Caco-2 (cell line): ENCODE measurements at regions of chr21 and their contacts with region 1.

Region 1: GRCh38 chr21:42289926-42290325 is 25.3 kb downstream of the TFF3 start:
- DNase-seq: no peak
- H3K4me3 ChIP-seq: no peak overlapping the region
- H3K4me3 Mint-ChIP-seq: no peak overlapping the region
- H3K27ac Mint-ChIP-seq: no peak overlapping the region
- H3K4me1 ChIP-seq: no peaks in the 10 kb centered on the region
- H3K4me1 Mint-ChIP-seq: no peaks in the 10 kb centered on the region
- H3K27me3 ChIP-seq: no peaks in the 10 kb centered on the region
- H3K27me3 Mint-ChIP-seq: peaks cover 10% of the 10 kb centered on the region
- CTCF ChIP-seq: no peak

Region 2: GRCh38 chr21:42392721-42393442 is 103.0 kb after region 1 on chr21:
- CTCF ChIA-PET with region 1: no interaction called
- POLR2A ChIA-PET with region 1: no interaction called
- intact Hi-C with region 1: no loop called
- DNase-seq: no peak
- H3K4me3 ChIP-seq: no peak overlapping the region
- H3K4me3 Mint-ChIP-seq: no peak overlapping the region
- H3K27ac Mint-ChIP-seq: no peak overlapping the region
- H3K4me1 ChIP-seq: peaks cover 10% of the 10 kb centered on the region; the same call in 1 of the 2 replicates
- H3K4me1 Mint-ChIP-seq: peaks cover 27% of the 10 kb centered on the region
- H3K27me3 ChIP-seq: no peaks in the 10 kb centered on the region
- H3K27me3 Mint-ChIP-seq: no peaks in the 10 kb centered on the region
- CTCF ChIP-seq: no peak

Region 3: GRCh38 chr21:42614811-42615659 is 325.1 kb after region 1 on chr21:
- CTCF ChIA-PET with region 1: no interaction called
- POLR2A ChIA-PET with region 1: no interaction called
- intact Hi-C with region 1: loop called (anchors 5 kb)
- DNase-seq: peak; percentile 70 to 87
- H3K4me3 ChIP-seq: no peak overlapping the region
- H3K4me3 Mint-ChIP-seq: no peak overlapping the region
- H3K27ac Mint-ChIP-seq: no peak overlapping the region
- H3K4me1 ChIP-seq: peaks cover 13% of the 10 kb centered on the region
- H3K4me1 Mint-ChIP-seq: no peaks in the 10 kb centered on the region
- H3K27me3 ChIP-seq: no peaks in the 10 kb centered on the region
- H3K27me3 Mint-ChIP-seq: no peaks in the 10 kb centered on the region
- CTCF ChIP-seq: no peak